Activated T-helper 2 cell treated with anti-CD3 and anti-CD28 coated beads, Interferon-gamma antibody, Interleukin-2, Interleukin-4, amounts not matched to agents 10 μg/mL and 5 μg/mL and 100 μg/mL, durations not matched to agents 14 hours and 24 hours and 36 hours (primary cell): ENCODE measurements at regions of chr14 and their contacts with region 1.

Region 1: GRCh38 chr14:61388173-61388975 is 67.0 kb downstream of the PRKCH start:
- DNase-seq: no peak
- H3K4me3 Mint-ChIP-seq: peak overlapping the region; percentile 26
- H3K27ac Mint-ChIP-seq: no peak overlapping the region
- H3K4me1 Mint-ChIP-seq: peaks cover 34% of the 10 kb centered on the region
- H3K27me3 Mint-ChIP-seq: no peaks in the 10 kb centered on the region

Region 2: GRCh38 chr14:61296719-61297502 is 91.5 kb before region 1 on chr14:
- intact Hi-C with region 1: no loop called
- DNase-seq: no peak
- H3K4me3 Mint-ChIP-seq: no peak overlapping the region
- H3K27ac Mint-ChIP-seq: no peak overlapping the region
- H3K4me1 Mint-ChIP-seq: peaks cover 36% of the 10 kb centered on the region
- H3K27me3 Mint-ChIP-seq: no peaks in the 10 kb centered on the region

Region 3: GRCh38 chr14:61326847-61327246 is 61.5 kb before region 1 on chr14:
- intact Hi-C with region 1: loop called (anchors 1 kb)
- DNase-seq: no peak
- H3K4me3 Mint-ChIP-seq: peak overlapping the region; percentile 76
- H3K27ac Mint-ChIP-seq: peak overlapping the region; percentile 86
- H3K4me1 Mint-ChIP-seq: peaks cover 61% of the 10 kb centered on the region
- H3K27me3 Mint-ChIP-seq: no peaks in the 10 kb centered on the region

Region 4: GRCh38 chr14:61342486-61342885 is 45.9 kb before region 1 on chr14:
- intact Hi-C with region 1: loop called (anchors 1 kb)
- DNase-seq: peak; percentile 83
- H3K4me3 Mint-ChIP-seq: peak overlapping the region; percentile 70
- H3K27ac Mint-ChIP-seq: peak overlapping the region; percentile 97
- H3K4me1 Mint-ChIP-seq: peaks cover 82% of the 10 kb centered on the region
- H3K27me3 Mint-ChIP-seq: no peaks in the 10 kb centered on the region

Region 5: DNA sequence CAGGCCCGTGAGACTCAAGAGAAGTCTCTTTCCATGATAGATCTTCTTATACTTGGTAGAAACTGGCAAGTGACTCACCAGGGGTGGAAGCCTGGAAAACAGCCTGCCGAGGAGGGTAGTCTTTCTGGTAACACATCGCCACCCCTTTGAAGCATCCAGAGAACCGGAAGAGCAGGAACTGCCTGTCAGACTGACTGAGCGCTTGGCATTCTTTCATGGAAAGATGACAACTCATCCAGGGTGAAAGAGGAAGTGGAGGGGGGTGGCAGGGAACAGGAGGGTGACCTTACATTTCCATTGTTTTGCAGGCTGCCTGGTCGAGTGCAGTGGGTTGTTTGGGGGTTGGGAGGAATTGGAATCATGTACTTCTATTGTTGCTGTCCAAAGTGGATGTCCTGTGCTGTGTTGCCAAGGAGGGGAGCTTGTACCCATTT is 32.5 kb before region 1 on chr14:
- intact Hi-C with region 1: loop called (anchors 2 kb)
- DNase-seq: no peak
- H3K4me3 Mint-ChIP-seq: peak overlapping the region; percentile 11
- H3K27ac Mint-ChIP-seq: peak overlapping the region; percentile 68
- H3K4me1 Mint-ChIP-seq: peaks cover 78% of the 10 kb centered on the region
- H3K27me3 Mint-ChIP-seq: no peaks in the 10 kb centered on the region

Region 6: DNA sequence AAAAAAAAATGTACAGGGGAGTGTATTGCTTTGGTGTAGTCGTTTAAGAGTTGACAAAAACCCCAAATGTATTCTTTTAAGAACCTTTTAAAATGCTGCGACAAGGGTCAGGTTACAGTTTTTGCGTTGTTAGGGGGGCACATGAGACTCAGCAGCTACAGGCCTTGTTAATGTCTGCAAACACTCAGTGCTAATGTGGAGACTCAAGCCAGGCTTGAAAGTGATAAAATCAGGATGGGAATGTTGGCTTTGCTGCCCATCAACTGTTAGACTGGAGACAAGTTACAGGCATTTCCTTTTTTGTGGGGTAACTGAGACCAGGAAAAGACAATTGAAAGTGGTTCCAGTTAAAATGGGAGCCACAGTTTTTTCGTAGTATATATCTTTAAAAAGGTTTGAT is 17.8 kb after region 1 on chr14:
- intact Hi-C with region 1: loop called (anchors 1 kb)
- DNase-seq: no peak
- H3K4me3 Mint-ChIP-seq: no peak overlapping the region
- H3K27ac Mint-ChIP-seq: peak overlapping the region; percentile 18
- H3K4me1 Mint-ChIP-seq: peaks cover 62% of the 10 kb centered on the region
- H3K27me3 Mint-ChIP-seq: no peaks in the 10 kb centered on the region

Region 7: GRCh38 chr14:61444215-61444768 is 55.9 kb after region 1 on chr14:
- intact Hi-C with region 1: loop called (anchors 2 kb)
- DNase-seq: peak; percentile 65
- H3K4me3 Mint-ChIP-seq: peak overlapping the region; percentile 40
- H3K27ac Mint-ChIP-seq: peak overlapping the region; percentile 89
- H3K4me1 Mint-ChIP-seq: peaks cover 89% of the 10 kb centered on the region
- H3K27me3 Mint-ChIP-seq: no peaks in the 10 kb centered on the region